ENCODE measurements at regions of chr4 and their contacts with region 1.

Region 1: GRCh38 chr4:105140684-105141490 is 5.8 kb upstream of the TET2 start:
- DNase-seq: peak in 4 of 5 donors; percentile 25 to 34 (median 27)
- ATAC-seq: peak in 3 of 4 donors; percentile 64 to 75 (median 68)
- H3K4me3 ChIP-seq: no peak overlapping the region
- H3K27ac ChIP-seq: no peak overlapping the region
- H3K4me1 ChIP-seq: peaks cover 0 to 24% (median 0%) of the 10 kb centered on the region in 12 donors
- H3K27me3 ChIP-seq: no peaks in the 10 kb centered on the region
- CTCF ChIP-seq: peak; percentile 58 to 82 (median 70)
- POLR2A ChIP-seq: no peak

Region 2: DNA sequence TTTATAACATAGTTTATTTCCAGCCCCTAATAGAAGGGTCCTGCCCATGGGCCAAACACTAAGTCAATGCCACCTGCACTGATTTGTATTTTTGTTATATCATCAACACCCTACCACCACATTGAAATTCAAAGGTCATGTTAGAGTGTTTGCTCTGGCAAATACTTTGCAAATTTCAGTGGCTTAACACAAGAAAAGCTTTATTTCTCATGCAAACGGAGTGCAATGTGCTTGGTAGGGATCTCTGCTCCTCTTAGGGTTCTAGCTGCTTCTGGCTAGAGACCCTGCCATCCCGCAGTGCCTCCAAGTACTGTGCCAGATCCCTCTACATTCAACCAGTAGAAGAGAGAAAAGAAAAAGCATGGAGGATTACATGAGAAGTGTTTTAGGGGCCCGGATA is 225.0 kb before region 1 on chr4:
- intact Hi-C with region 1: no loop called
- DNase-seq: no peak
- ATAC-seq: no peak
- H3K4me3 ChIP-seq: no peak overlapping the region
- H3K27ac ChIP-seq: no peak overlapping the region
- H3K4me1 ChIP-seq: no peaks in the 10 kb centered on the region
- H3K27me3 ChIP-seq: no peaks in the 10 kb centered on the region
- CTCF ChIP-seq: no peak
- POLR2A ChIP-seq: no peak

Region 3: DNA sequence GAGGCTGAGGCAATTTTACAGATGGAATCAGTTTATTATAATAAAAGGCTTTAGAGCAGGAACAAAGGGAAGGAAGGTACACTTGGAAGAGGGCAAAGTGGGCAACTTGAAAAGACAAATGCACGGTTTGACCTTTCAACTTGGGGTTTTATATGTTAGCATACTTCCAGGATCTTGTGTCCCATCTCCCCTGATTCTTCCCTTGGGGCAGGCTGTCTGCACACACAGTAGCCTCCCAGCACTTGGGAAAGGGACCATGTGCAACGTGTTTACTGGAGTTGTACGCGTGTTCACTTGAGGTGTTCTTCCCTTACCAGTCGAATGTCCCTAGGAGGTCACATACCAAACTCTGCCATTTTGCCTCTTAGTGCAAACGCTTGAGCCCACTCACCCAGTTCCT is 325.7 kb after region 1 on chr4:
- intact Hi-C with region 1: loop called in 8 of 10 experiments (anchors 1 to 5 kb)
- DNase-seq: no peak
- ATAC-seq: no peak
- H3K4me3 ChIP-seq: no peak overlapping the region
- H3K27ac ChIP-seq: no peak overlapping the region
- H3K4me1 ChIP-seq: peaks cover 0 to 36% (median 19%) of the 10 kb centered on the region in 12 donors
- H3K27me3 ChIP-seq: no peaks in the 10 kb centered on the region
- CTCF ChIP-seq: no peak
- POLR2A ChIP-seq: no peak

Region 4: DNA sequence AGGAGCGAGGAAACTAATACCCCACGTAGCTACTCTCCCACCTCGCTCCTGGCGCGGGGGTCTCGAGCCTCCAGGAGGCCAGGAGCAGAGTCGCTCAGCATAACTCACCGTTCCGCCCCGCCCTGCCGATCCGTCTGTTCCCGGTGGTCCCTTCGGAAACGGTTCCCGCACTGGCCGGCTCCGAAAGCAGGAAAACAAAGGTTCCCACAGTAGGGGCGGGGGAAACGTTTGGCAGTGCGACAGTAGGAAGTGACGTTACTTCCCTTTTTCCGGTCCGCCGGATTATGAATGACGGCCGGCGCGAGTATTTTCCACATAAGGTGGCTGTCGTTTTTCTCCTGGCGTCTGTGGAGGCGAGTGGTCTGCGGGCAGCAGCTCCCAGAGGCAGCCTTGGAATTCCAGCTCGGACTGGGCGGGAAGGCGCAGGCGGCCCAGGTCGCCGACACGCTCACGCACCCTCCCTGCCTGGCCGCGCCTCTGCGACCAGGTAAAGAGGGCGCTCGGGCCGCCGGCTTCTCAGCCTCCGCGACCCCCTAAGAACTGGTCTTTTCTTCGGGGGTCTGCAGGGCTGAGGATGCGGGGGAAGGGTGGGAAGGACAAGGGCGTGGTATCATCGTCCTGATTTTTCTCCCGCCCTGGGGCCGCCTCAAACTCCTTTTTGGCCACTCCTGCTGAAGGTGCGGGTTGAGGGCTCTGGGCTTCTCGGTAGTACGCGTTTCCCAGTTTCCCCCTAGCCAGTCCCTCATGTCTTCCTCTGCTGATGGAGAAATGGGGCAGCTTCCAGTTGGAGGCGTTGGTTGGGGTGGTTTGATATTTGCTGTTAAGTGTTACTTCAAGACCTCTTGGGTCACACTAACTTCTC is 567.9 kb after region 1 on chr4 and contains the starts of genes GSTCD and INTS12:
- intact Hi-C with region 1: loop called in 5 of 10 experiments (anchors 5 to 10 kb)
- DNase-seq: peak; percentile 91 to 93 (median 92)
- ATAC-seq: peak; percentile 95 to 99 (median 98)
- H3K4me3 ChIP-seq: peak within 1 kb of the TSS; percentile 70 to 97 (median 90)
- H3K27ac ChIP-seq: peak within 1 kb of the TSS; percentile 47 to 90 (median 86)
- H3K4me1 ChIP-seq: peaks cover 0 to 30% (median 18%) of the 10 kb centered on the region in 12 donors
- H3K27me3 ChIP-seq: no peaks in the 10 kb centered on the region
- CTCF ChIP-seq: no peak
- POLR2A ChIP-seq: peak in 1 of 2 donors; percentile 63
- total RNA-seq, gene GSTCD: 2.4 to 6.4 (median 5.0) TPM
- total RNA-seq, gene INTS12: 19.2 to 27.9 (median 22.2) TPM

Measured in heart left ventricle (tissue), 16 donors.